CD4-positive, alpha-beta memory T cell (primary cell): ENCODE measurements at regions of chr21 and their contacts with region 1.

Region 1: DNA sequence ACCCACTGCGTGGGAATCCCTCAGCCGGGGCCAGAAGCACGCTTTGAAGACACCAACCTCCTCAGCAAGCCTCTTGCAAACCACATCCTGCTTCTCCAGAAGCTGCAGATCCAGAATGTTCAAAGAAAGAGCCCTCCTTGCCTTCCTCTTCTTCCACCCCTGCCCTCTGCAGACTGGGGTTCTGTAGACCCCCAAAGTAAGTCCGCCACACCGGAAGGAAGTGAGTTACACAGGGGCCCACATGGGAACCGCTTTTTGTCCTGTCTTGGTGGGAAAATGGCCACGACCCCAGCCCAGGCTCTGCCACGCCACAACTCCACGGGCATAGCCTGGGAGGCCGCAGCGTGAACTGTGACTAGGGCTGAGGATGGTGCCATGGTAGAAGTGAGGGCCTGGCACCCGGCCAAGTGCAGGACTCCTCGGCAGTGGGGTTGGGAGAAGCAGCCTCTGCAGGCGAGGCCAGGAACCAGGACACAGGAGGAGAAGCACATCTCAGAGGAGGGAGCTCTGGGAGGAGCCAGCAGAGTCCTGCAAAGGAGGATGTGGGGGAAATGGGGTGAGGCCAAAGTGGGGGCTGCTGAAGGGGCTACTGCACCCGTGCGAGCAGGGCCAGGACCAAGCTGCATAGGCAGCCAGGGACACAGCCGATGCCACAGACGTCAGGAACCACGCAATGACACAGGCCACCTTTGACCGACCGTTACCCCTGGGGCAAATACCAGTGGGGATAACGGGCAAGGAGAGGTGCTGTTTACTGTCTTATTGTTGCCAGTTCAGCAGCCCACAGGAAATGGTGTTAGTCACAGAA is 30.9 kb downstream of the PDE9A start:
- DNase-seq: peak; percentile 52 to 74 (median 62)
- H3K4me3 ChIP-seq: peak overlapping the region; percentile 39 to 51
- H3K4me3 Mint-ChIP-seq: peak overlapping the region; percentile 74 to 90 (median 84)
- H3K27ac ChIP-seq: peak overlapping the region; percentile 19
- H3K27ac Mint-ChIP-seq: peak overlapping the region; percentile 86 to 95 (median 91)
- H3K4me1 ChIP-seq: peaks cover 46% of the 10 kb centered on the region
- H3K4me1 Mint-ChIP-seq: peaks cover 27 to 54% (median 37%) of the 10 kb centered on the region in 4 donors
- H3K27me3 ChIP-seq: no peaks in the 10 kb centered on the region
- H3K27me3 Mint-ChIP-seq: no peaks in the 10 kb centered on the region

Region 2: DNA sequence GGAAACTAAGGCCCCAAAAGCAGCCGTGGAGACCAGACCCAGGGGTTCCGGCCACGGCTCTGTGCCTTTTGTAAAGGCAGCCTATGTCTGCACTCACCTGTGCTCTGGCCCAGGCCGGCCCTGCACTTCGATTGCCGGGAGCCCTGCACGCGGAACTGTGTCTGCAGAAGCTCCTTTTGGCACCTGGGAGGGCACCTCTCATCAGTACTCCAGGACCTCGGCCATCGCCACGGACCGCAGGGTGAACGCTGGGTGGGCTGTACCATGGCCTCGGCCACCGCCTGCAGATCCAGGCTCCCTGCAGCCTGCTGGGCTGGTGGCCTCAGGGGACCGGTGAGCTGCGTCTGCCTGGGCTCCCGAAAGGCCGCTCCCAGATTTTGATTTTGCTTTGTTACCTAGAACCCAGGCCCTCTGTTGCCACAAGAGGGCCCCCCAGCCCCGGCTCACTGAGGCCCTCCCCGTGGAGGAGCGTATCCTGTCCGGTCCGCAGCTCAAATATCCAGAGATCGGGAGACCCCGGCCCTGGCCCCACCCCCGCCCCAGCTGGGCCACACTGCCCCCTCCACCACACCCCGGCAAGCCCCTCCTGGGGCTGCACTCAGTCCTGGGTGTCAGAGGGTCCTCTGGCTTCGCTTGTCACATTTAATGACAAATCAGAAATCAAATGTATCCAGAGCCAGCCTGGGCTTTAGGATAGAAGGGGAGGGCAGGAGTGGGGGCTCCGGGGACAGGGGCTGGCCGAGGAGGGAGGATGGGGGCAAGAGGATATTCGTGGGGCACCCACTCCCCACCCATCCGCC is 91.1 kb before region 1 on chr21:
- CTCF ChIA-PET with region 1: interaction called, 4 read pairs
- POLR2A ChIA-PET with region 1: interaction called, 3 read pairs
- intact Hi-C with region 1: loop called (anchors 5 kb)
- DNase-seq: peak; percentile 52 to 68 (median 66)
- H3K4me3 ChIP-seq: no peak overlapping the region
- H3K4me3 Mint-ChIP-seq: no peak overlapping the region
- H3K27ac ChIP-seq: no peak overlapping the region
- H3K27ac Mint-ChIP-seq: peak overlapping the region in 1 of 7 donors; percentile 57
- H3K4me1 ChIP-seq: peaks cover 14% of the 10 kb centered on the region
- H3K4me1 Mint-ChIP-seq: peaks cover 0 to 9% (median 6%) of the 10 kb centered on the region in 4 donors
- H3K27me3 ChIP-seq: no peaks in the 10 kb centered on the region
- H3K27me3 Mint-ChIP-seq: peaks cover 0 to 2% of the 10 kb centered on the region in 2 donors

Region 3: GRCh38 chr21:42644223-42645208 is 39.8 kb before region 1 on chr21:
- CTCF ChIA-PET with region 1: no interaction called
- POLR2A ChIA-PET with region 1: no interaction called
- intact Hi-C with region 1: no loop called
- DNase-seq: no peak
- H3K4me3 ChIP-seq: no peak overlapping the region
- H3K4me3 Mint-ChIP-seq: no peak overlapping the region
- H3K27ac ChIP-seq: no peak overlapping the region
- H3K27ac Mint-ChIP-seq: no peak overlapping the region
- H3K4me1 ChIP-seq: no peaks in the 10 kb centered on the region
- H3K4me1 Mint-ChIP-seq: no peaks in the 10 kb centered on the region
- H3K27me3 ChIP-seq: no peaks in the 10 kb centered on the region
- H3K27me3 Mint-ChIP-seq: peaks cover 6 to 9% of the 10 kb centered on the region in 2 donors

Region 4: GRCh38 chr21:42746593-42747275 is 62.4 kb after region 1 on chr21:
- CTCF ChIA-PET with region 1: no interaction called
- POLR2A ChIA-PET with region 1: interaction called, 20 read pairs
- intact Hi-C with region 1: loop called (anchors 5 kb)
- DNase-seq: peak; percentile 62 to 75 (median 67)
- H3K4me3 ChIP-seq: peak overlapping the region in 1 of 2 donors; percentile 5
- H3K4me3 Mint-ChIP-seq: peak overlapping the region; percentile 69 to 88 (median 76)
- H3K27ac ChIP-seq: peak overlapping the region; percentile 54
- H3K27ac Mint-ChIP-seq: peak overlapping the region; percentile 84 to 99 (median 96)
- H3K4me1 ChIP-seq: peaks cover 29% of the 10 kb centered on the region
- H3K4me1 Mint-ChIP-seq: peaks cover 9 to 38% (median 28%) of the 10 kb centered on the region in 4 donors
- H3K27me3 ChIP-seq: no peaks in the 10 kb centered on the region
- H3K27me3 Mint-ChIP-seq: no peaks in the 10 kb centered on the region

Region 5: DNA sequence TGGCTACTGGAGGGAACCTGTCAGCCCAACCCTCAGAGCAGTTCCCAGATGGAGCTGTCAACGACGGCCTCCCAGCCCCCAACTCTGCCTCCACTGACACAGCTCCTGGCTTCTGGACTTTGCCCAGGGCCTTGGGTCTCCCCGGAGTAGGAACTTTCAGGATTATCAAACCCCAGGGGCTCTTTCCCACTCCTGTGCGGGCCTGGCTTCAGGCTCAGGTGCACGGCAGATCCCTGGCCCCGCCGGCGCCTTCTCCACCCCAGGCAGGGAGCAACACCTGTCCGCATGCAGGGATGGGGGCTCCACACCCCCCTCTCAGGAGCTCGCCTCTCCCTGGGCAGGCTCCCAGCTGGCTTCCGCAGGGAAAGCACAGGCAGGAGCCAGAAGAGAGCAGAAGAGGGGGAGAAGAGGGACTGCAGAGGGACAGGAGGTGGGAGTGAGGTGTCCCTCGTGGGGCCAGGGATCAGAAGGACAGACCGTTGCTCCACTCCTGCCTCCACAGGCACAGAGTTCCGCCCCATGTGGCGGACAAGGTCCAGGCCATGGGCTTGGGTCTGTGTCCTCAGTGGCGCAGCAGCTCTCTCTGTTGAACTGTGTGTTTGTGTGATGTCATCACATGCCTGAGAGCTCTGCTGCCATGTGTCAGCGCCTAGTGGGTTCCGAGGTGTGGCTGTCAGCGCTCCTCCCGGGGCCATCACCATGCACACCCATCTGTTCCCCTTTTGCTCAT is 76.8 kb after region 1 on chr21:
- CTCF ChIA-PET with region 1: no interaction called
- POLR2A ChIA-PET with region 1: no interaction called
- intact Hi-C with region 1: no loop called
- DNase-seq: no peak
- H3K4me3 ChIP-seq: no peak overlapping the region
- H3K4me3 Mint-ChIP-seq: no peak overlapping the region
- H3K27ac ChIP-seq: no peak overlapping the region
- H3K27ac Mint-ChIP-seq: no peak overlapping the region
- H3K4me1 ChIP-seq: no peaks in the 10 kb centered on the region
- H3K4me1 Mint-ChIP-seq: peaks cover 0 to 6% (median 0%) of the 10 kb centered on the region in 4 donors
- H3K27me3 ChIP-seq: no peaks in the 10 kb centered on the region
- H3K27me3 Mint-ChIP-seq: no peaks in the 10 kb centered on the region

Region 6: GRCh38 chr21:42781150-42781970 is 97.0 kb after region 1 on chr21:
- CTCF ChIA-PET with region 1: no interaction called
- POLR2A ChIA-PET with region 1: interaction called, 9 read pairs
- intact Hi-C with region 1: loop called (anchors 2 kb)
- DNase-seq: no peak
- H3K4me3 ChIP-seq: no peak overlapping the region
- H3K4me3 Mint-ChIP-seq: peak overlapping the region in 7 of 8 donors; percentile 40 to 80 (median 63)
- H3K27ac ChIP-seq: no peak overlapping the region
- H3K27ac Mint-ChIP-seq: peak overlapping the region in 4 of 7 donors; percentile 62 to 79 (median 66)
- H3K4me1 ChIP-seq: peaks cover 43% of the 10 kb centered on the region
- H3K4me1 Mint-ChIP-seq: peaks cover 30 to 51% (median 40%) of the 10 kb centered on the region in 4 donors
- H3K27me3 ChIP-seq: no peaks in the 10 kb centered on the region
- H3K27me3 Mint-ChIP-seq: no peaks in the 10 kb centered on the region